Right ventricle myocardium inferior (tissue), 1 donor: ENCODE measurements at regions of chr12 and their contacts with region 1.

Region 1: DNA sequence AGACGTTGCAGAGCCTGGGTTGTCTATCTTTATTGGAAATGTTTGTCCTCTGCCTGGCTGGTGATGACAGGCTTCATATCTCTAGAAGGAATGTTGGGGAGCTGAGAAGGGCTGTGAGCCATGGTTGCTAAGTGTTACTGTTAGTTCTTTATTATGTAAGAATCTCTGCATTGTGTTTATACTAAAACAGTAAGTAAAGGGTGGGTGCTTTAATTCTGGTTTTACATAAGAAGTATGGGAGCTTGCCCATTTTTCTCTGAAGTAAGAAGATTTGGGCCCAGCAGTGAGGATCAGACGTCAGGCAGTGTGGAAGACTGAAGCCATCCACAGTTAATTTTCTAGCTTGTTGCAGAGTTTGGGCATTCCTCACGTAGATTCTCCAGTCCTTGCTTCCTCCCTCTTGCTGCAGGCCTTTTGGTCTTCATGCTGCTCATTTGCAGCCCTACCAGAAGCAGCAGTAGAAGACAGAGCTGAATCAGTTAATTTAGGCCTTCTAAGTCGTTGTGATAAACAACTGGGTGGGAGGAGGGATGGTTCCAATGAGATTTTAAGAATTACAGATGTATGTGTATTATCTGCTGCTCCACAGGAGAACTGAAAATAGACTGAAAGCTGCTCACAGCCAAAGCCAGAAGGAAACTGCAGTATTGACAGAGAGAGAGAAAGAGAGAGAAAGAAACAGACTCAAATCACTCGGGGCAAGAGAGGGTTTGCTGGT is 21.4 kb downstream of the WNT5B start:
- DNase-seq: no peak
- ATAC-seq: peak; percentile 87

Region 2: GRCh38 chr12:1583421-1584078 is 66.9 kb before region 1 on chr12:
- intact Hi-C with region 1: no loop called
- DNase-seq: no peak
- ATAC-seq: peak; percentile 85

Region 3: GRCh38 chr12:1607940-1608712 is 42.3 kb before region 1 on chr12:
- intact Hi-C with region 1: loop called (anchors 2 kb)
- DNase-seq: no peak
- ATAC-seq: no peak

Region 4: DNA sequence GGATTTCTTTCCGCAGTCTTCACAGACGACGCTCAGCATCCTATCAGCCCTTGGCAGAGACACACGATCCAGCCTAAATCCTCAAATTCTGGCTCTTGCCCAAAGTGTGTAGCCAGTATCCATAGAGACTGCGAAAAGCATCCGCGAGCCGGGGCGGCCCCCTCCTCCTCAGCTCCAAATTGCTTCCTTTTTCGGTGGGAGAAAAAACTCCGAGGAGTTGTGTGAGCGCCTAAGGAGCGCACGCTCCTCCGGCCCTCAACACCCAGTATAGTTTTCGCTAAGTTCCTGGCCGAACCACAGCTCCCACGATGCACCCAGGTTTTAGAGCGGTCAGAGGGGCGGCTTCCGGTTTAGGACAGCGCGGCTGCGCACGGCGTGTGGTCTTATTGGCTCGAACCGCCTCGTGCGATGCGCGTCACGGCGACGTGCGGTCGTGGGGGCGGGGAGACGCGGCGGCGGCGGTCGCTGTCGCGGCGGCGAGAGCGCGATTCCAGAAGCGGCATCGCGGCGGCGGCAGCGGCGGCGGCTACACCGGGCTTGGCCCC is 40.2 kb after region 1 on chr12 and contains the start of gene ADIPOR2:
- intact Hi-C with region 1: loop called (anchors 5 kb)
- DNase-seq: peak; percentile 98
- ATAC-seq: peak; percentile 99
- total RNA-seq, gene ADIPOR2: 38.4 TPM

Region 5: DNA sequence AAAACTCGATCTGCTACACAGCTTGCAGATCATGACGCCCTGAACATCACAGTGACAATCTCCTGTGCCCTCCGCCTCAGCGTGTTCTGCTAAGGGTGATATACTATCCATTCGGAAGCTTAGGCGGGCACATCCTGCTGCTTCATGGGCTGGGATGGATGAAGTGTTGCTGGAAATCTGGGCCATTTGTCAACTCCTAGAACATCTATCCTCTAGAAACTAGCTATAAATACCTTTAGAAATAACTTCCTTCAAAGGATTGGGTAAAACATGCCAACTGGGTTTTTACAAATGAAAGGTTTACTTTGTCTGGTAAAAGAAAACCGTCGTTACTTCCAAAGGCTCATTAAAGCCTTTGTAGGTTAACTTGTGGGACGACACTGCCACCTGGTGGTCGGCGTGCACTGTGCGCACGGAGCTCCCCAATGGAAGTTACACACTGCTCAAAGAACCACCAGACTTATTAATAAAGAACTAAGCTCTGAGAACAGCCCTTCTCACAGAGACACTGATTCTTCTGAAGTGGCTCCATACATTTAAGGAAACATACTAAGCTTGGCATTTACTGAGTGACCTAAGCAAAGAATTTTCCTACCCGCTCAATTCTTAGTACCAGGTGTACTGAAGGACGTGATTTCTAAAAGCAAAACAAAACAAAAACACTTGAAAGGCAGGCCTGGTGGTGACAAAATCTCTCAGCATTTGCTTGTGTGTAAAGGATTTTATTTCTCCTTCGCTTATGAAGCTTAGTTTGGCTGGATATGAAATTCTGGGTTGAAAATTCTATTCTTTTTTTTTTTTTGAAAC is 289.6 kb after region 1 on chr12:
- intact Hi-C with region 1: loop called (anchors 5 kb)
- DNase-seq: peak; percentile 93
- ATAC-seq: peak; percentile 86